Activated naive CD4-positive, alpha-beta T cell treated with anti-CD3 and anti-CD28 coated beads, Interleukin-2, amount 10 ng/mL, durations not matched to agents 7 days and 5 days (primary cell): ENCODE measurements at regions of chr12 and their contacts with region 1.

Region 1: GRCh38 chr12:9049520-9050133 is 60.3 kb downstream of the KLRG1 start:
- DNase-seq: peak; percentile 40
- H3K4me3 Mint-ChIP-seq: no peak overlapping the region
- H3K27ac Mint-ChIP-seq: no peak overlapping the region
- H3K4me1 Mint-ChIP-seq: peaks cover 23% of the 10 kb centered on the region
- H3K27me3 Mint-ChIP-seq: no peaks in the 10 kb centered on the region

Region 2: DNA sequence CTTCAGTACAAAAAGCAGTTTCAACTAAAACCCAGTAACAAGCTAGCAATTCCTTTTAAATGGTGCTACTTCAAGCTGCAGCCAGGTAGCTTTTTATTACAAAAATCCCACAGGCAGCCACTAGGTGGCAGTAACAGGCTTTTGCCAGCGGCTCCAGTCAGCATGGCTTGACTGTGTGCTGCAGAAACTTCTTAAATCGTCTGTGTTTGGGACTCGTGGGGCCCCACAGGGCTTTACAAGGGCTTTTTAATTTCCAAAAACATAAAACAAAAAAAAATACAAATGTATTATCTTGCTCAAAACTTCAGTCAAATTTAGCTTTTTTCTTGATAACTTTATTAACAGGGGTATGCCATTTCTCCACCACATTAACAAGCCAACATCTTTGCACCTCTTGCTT is 505.3 kb before region 1 on chr12:
- CTCF ChIA-PET with region 1: interaction called, 11 read pairs
- DNase-seq: peak; percentile 85
- H3K4me3 Mint-ChIP-seq: no peak overlapping the region
- H3K27ac Mint-ChIP-seq: no peak overlapping the region
- H3K4me1 Mint-ChIP-seq: peaks cover 10% of the 10 kb centered on the region
- H3K27me3 Mint-ChIP-seq: peaks cover 30% of the 10 kb centered on the region

Region 3: GRCh38 chr12:8681041-8681902 is 368.4 kb before region 1 on chr12:
- CTCF ChIA-PET with region 1: interaction called, 27 read pairs
- DNase-seq: no peak
- H3K4me3 Mint-ChIP-seq: no peak overlapping the region
- H3K27ac Mint-ChIP-seq: no peak overlapping the region
- H3K4me1 Mint-ChIP-seq: peaks cover 4% of the 10 kb centered on the region
- H3K27me3 Mint-ChIP-seq: peaks cover 13% of the 10 kb centered on the region

Region 4: GRCh38 chr12:8890313-8891085 is 159.1 kb before region 1 on chr12:
- CTCF ChIA-PET with region 1: interaction called, 16 read pairs
- DNase-seq: peak; percentile 70
- H3K4me3 Mint-ChIP-seq: peak overlapping the region; percentile 72
- H3K27ac Mint-ChIP-seq: no peak overlapping the region
- H3K4me1 Mint-ChIP-seq: peaks cover 4% of the 10 kb centered on the region
- H3K27me3 Mint-ChIP-seq: peaks cover 23% of the 10 kb centered on the region

Region 5: DNA sequence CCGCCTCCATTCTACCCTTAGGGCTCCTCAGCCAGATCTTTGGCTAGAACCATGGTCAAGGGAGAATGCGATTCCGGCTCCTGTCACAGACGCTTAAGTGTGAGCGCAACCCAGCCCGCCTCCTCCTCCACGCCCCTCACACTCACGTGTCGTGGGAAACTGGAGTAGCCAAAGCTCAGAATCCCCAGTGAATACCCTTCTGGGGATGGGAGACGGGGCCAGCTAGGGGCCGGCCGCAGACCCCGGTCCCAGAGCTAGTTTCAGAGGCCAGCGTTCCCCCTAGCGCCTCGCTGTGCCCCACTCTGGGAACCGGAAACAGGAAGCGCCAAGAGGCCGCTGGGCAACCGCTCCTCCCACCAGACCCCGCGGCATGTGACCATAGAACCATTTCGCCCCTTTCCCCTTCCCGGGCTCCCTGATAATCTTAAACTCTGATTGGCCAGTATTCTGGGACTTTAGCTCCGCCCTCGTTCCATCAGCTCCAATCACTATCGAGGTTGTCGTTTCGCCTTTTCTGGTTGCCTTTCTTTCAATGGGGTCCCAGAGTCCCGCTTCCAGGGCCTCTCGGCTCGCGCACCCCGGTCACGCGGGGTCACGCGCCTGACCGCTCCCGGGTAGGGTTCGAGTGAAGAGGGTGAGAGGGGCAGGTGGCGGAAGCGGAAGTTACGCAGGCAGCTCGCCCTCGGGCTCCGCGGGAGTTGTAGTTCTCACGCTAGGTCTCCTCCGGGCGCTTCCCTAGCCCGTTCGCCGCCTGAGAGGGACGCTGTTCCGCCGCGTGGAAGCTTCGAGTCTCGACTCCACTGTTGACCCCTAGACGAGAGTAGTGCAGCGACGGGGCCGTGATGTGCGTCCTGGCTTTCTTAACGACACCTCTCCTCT is 100.0 kb before region 1 on chr12 and contains the start of gene M6PR:
- CTCF ChIA-PET with region 1: interaction called, 61 read pairs
- DNase-seq: peak; percentile 95
- H3K4me3 Mint-ChIP-seq: peak within 1 kb of the TSS; percentile 98
- H3K27ac Mint-ChIP-seq: peak within 1 kb of the TSS; percentile 93
- H3K4me1 Mint-ChIP-seq: peaks cover 66% of the 10 kb centered on the region
- H3K27me3 Mint-ChIP-seq: no peaks in the 10 kb centered on the region

Region 6: DNA sequence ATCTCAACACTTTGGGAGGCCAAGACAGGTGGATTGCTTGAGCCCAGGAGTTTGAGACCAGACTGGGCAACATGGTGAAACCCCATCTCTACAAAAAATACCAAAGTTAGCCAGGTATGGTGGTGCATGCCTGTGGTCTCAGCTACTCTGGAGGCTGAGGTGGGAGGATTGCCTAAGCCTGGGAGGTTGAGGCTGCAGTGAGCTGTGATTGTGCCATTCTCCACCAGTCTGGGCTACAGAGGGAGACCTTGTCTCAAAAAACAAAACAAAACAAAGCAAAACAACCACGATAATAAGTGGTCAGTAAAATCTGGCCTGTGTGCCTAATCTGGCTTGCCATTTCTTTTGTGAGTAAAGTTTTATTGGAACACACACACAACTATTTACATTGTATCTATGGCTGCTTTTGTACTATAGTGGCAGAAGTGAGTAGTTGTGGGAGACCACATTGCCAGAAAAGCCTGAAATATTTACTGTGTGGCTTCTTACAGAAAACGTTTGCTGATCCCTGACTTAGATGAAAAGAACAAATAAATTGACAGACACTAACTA is 79.7 kb before region 1 on chr12:
- CTCF ChIA-PET with region 1: no interaction called
- DNase-seq: no peak
- H3K4me3 Mint-ChIP-seq: no peak overlapping the region
- H3K27ac Mint-ChIP-seq: no peak overlapping the region
- H3K4me1 Mint-ChIP-seq: peaks cover 3% of the 10 kb centered on the region
- H3K27me3 Mint-ChIP-seq: no peaks in the 10 kb centered on the region

Region 7: GRCh38 chr12:9064201-9064814 is 14.7 kb after region 1 on chr12:
- CTCF ChIA-PET with region 1: interaction called, 21 read pairs
- DNase-seq: peak; percentile 70
- H3K4me3 Mint-ChIP-seq: peak overlapping the region; percentile 62
- H3K27ac Mint-ChIP-seq: no peak overlapping the region
- H3K4me1 Mint-ChIP-seq: peaks cover 6% of the 10 kb centered on the region
- H3K27me3 Mint-ChIP-seq: peaks cover 25% of the 10 kb centered on the region

Region 8: GRCh38 chr12:9107542-9107873 is 57.9 kb after region 1 on chr12:
- CTCF ChIA-PET with region 1: no interaction called
- DNase-seq: no peak
- H3K4me3 Mint-ChIP-seq: no peak overlapping the region
- H3K27ac Mint-ChIP-seq: no peak overlapping the region
- H3K4me1 Mint-ChIP-seq: no peaks in the 10 kb centered on the region
- H3K27me3 Mint-ChIP-seq: no peaks in the 10 kb centered on the region